Activated T-helper 1 cell treated with anti-CD3 and anti-CD28 coated beads, Interleukin-12 subunit alpha, Interleukin-12 subunit beta, Interleukin-2, Interleukin-4 antibody, amounts not matched to agents 30 ng/mL and 10 ng/mL and 1 ng/mL, durations not matched to agents 14 hours and 24 hours and 36 hours (primary cell): ENCODE measurements at regions of chr10 and their contacts with region 1.

Region 1: GRCh38 chr10:88091490-88092105 is 228.2 kb downstream of the PTEN start:
- DNase-seq: peak; percentile 76
- H3K4me3 Mint-ChIP-seq: peak overlapping the region; percentile 13
- H3K27ac Mint-ChIP-seq: peak overlapping the region; percentile 68
- H3K4me1 Mint-ChIP-seq: peaks cover 35% of the 10 kb centered on the region
- H3K27me3 Mint-ChIP-seq: peaks cover 29% of the 10 kb centered on the region

Region 2: GRCh38 chr10:88064608-88065382 is 26.8 kb before region 1 on chr10:
- intact Hi-C with region 1: loop called (anchors 1 kb)
- DNase-seq: peak; percentile 11
- H3K4me3 Mint-ChIP-seq: no peak overlapping the region
- H3K27ac Mint-ChIP-seq: peak overlapping the region; percentile 66
- H3K4me1 Mint-ChIP-seq: peaks cover 60% of the 10 kb centered on the region
- H3K27me3 Mint-ChIP-seq: no peaks in the 10 kb centered on the region

Region 3: GRCh38 chr10:88138319-88138848 is 46.8 kb after region 1 on chr10:
- intact Hi-C with region 1: loop called (anchors 1 kb)
- DNase-seq: no peak
- H3K4me3 Mint-ChIP-seq: peak overlapping the region; percentile 59
- H3K27ac Mint-ChIP-seq: peak overlapping the region; percentile 76
- H3K4me1 Mint-ChIP-seq: peaks cover 29% of the 10 kb centered on the region
- H3K27me3 Mint-ChIP-seq: peaks cover 8% of the 10 kb centered on the region

Region 4: GRCh38 chr10:88152720-88153119 is 61.1 kb after region 1 on chr10:
- intact Hi-C with region 1: loop called (anchors 1 kb)
- DNase-seq: peak; percentile 57
- H3K4me3 Mint-ChIP-seq: peak overlapping the region; percentile 54
- H3K27ac Mint-ChIP-seq: peak overlapping the region; percentile 97
- H3K4me1 Mint-ChIP-seq: peaks cover 37% of the 10 kb centered on the region
- H3K27me3 Mint-ChIP-seq: peaks cover 5% of the 10 kb centered on the region

Region 5: GRCh38 chr10:88194041-88194887 is 102.7 kb after region 1 on chr10:
- intact Hi-C with region 1: loop called (anchors 1 kb)
- DNase-seq: peak; percentile 47
- H3K4me3 Mint-ChIP-seq: peak overlapping the region; percentile 43
- H3K27ac Mint-ChIP-seq: peak overlapping the region; percentile 90
- H3K4me1 Mint-ChIP-seq: peaks cover 35% of the 10 kb centered on the region
- H3K27me3 Mint-ChIP-seq: peaks cover 3% of the 10 kb centered on the region

Region 6: DNA sequence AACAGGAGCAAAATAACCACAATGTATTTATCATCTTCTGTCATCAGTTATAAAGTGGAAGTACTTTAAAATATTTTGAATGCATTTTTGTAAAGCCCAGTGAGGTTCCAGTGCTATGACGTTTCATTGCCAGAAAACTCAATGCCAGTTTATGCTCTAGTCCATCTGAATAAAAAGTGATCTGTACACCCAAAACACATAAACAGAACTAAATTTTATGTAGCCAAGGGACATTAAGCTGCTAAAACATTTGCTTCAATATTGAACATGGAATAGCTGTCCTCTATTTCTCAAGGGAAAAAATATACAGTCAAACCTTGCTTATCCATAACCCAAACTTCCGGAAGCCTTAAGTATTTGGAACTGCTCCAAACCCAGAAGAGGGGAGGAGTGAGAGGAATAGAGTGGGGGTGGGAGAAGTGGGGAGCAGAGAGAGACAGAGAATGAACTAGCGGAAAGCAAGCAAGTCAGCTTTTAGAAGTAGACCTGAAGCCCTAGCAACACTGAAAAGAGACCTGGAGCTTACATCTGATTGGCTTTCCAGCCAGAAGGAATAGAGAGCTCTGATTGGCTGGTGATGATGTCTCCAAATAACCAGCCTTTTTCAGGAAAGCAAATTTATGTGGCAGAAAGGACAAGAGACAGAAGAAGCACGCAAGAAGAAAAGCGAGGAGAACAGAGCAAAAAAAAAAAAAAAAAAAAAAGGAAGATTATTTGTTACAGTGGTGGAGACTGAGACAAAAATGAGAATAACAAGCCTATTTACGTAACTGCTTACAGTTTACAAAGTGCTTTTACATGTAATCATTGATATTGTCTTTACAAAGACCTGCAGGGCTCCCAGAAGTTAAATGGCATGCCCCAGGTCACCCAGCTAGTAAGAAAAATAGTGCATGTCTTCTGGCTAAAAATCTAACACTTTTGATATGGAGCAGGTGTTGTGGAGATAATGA is 295.5 kb after region 1 on chr10:
- intact Hi-C with region 1: loop called (anchors 1 kb)
- DNase-seq: no peak
- H3K4me3 Mint-ChIP-seq: no peak overlapping the region
- H3K27ac Mint-ChIP-seq: no peak overlapping the region
- H3K4me1 Mint-ChIP-seq: peaks cover 16% of the 10 kb centered on the region
- H3K27me3 Mint-ChIP-seq: no peaks in the 10 kb centered on the region

Region 7: GRCh38 chr10:88820748-88821389 is 729.3 kb after region 1 on chr10:
- intact Hi-C with region 1: loop called (anchors 1 kb)
- DNase-seq: no peak
- H3K4me3 Mint-ChIP-seq: no peak overlapping the region
- H3K27ac Mint-ChIP-seq: no peak overlapping the region
- H3K4me1 Mint-ChIP-seq: peaks cover 51% of the 10 kb centered on the region
- H3K27me3 Mint-ChIP-seq: peaks cover 7% of the 10 kb centered on the region